ENCODE measurements at regions of chr16 and their contacts with region 1.

Region 1: DNA sequence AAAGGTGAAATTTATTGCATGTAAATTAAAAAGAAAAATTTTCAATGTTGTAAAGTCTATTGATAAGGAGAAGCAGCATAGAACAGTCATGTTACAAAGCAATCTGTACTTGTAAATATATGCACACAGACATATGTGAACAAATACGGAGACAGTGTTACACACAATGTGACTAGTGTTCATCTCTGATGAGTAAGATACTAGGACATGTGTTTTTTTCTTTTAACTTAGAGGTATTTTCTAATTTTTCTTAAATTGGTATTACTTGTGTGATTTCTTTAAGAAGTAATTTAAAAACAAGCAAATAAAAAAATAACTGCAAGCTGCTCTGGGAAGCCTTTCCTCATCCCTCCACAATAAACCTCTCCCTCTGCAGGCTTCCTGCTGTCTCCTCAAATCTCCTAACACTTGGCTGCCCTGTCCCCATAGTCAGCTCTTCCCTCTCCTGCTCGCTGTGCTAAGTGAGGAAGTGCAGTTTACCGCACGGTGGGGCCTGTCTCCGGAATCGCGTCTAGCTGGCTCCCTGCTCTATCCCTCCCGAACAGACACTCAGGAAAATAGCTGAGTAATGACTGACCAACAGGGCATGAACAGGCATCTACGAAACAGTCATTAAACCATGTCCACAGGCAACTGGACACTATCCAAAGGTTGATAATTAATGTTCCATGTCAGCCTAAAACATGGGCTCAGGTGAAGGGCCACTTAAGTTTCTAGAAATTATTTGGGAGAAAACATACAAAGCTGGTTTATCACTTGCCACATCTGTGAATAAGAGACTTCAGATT is 35.9 kb downstream of the CMTM4 start:
- DNase-seq: peak; percentile 85
- H3K4me3 ChIP-seq: no peak overlapping the region
- H3K27ac ChIP-seq: peak overlapping the region; percentile 74
- H3K4me1 ChIP-seq: peaks cover 42% of the 10 kb centered on the region
- H3K27me3 ChIP-seq: no peaks in the 10 kb centered on the region
- CTCF ChIP-seq: peak in 1 of 2 donors; percentile 39

Region 2: DNA sequence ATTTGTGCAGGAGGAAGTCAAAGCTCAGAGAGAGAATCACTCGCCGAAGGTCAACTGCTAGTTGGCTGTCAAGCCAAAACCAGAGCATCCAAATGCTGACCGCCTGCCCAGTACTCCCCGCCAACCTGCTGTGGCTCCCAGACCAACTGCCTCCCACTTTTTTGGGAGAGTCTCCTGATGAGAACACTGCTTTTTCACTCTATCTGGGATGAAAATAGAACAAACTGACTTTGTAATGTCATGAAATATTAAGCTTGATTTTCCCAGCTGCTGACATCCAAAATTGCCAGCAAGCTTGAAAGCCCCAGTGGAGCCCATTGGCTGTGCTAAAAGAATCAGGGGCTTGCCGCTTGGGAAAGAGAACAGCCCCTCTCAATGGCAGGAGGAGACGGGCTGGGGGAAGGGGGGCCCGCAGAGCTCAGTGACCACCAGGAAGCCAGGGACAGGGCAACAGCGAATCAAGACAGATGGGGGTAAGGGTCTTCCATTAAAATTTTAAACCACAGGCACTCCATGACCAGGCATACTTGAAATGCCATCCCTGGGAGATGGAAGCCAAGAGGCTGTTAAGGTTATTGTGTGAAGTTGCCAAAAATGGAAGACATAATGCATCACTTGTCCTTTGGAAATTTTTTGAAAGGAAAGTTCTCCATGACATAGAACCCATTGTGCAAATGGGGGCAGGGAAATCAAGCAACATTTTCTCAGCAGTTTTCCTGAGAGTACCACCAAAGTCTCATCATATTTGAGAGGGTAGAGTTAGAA is 419.8 kb before region 1 on chr16:
- CTCF ChIA-PET with region 1: no interaction called
- dilution Hi-C with region 1: no loop called
- in situ Hi-C with region 1: no loop called
- intact Hi-C with region 1: no loop called
- DNase-seq: no peak
- H3K4me3 ChIP-seq: no peak overlapping the region
- H3K27ac ChIP-seq: no peak overlapping the region
- H3K4me1 ChIP-seq: no peaks in the 10 kb centered on the region
- H3K27me3 ChIP-seq: peaks cover 2% of the 10 kb centered on the region
- CTCF ChIP-seq: no peak

Region 3: GRCh38 chr16:66562407-66562806 is 98.2 kb before region 1 on chr16:
- CTCF ChIA-PET with region 1: interaction called, 11 read pairs
- dilution Hi-C with region 1: no loop called
- in situ Hi-C with region 1: no loop called
- intact Hi-C with region 1: no loop called
- DNase-seq: no peak
- H3K4me3 ChIP-seq: no peak overlapping the region
- H3K27ac ChIP-seq: no peak overlapping the region
- H3K4me1 ChIP-seq: no peaks in the 10 kb centered on the region
- H3K27me3 ChIP-seq: no peaks in the 10 kb centered on the region
- CTCF ChIP-seq: peak in 1 of 2 donors; percentile 38

Region 4: DNA sequence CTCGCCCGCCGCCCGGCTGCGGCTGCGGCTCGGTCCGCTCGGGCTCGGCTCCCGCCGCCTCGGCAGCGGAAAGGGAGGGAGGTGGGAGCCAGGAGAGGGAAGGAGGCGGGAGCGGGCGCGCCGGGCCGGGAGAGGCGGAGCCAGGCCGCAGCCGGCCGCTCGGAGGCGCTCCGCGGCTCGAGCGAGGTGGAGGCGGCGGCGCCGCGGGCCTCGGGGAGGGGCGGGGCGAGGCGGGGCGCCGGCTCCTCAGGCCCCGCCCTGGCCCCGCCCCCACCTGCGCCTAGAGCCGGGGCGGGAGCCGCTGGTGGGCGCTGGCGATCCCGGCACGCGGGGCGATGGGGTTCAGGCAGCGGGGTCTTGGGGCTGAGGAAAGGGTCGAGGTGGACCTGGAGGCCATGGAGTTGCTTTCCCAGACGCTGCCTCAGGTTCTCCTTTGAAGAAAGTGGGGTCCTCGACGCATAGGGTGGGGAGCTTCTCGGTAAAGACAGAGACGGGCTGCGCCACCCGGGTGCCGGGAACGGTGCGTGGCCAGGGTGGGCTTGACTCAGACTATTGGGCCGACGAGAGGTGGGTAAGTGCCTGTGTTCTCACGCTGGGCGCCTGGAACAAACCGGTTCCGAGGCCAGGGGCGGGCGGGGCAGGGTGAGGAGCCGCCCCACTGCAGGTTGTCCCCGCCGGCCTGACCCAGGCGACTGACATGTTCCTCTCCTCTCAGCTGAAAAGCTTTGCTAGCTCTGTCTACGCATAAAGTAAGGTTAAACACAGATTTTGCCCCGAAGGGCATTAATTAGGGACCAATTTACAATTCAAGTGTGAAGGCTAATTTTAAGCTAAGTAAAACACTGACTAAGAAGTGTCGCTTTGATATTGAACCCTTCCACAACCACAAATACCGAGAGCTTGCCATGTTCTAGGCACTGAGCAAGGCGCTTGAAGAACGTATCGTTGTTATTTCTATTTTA is 36.3 kb after region 1 on chr16 and contains the start of gene CMTM4:
- CTCF ChIA-PET with region 1: interaction called, 3 read pairs
- dilution Hi-C with region 1: no loop called
- in situ Hi-C with region 1: no loop called
- intact Hi-C with region 1: loop called (anchors 5 kb)
- DNase-seq: peak; percentile 88
- H3K4me3 ChIP-seq: peak within 1 kb of the TSS; percentile 79 to 98 (median 86)
- H3K27ac ChIP-seq: peak within 1 kb of the TSS; percentile 65
- H3K4me1 ChIP-seq: peaks cover 24% of the 10 kb centered on the region
- H3K27me3 ChIP-seq: no peaks in the 10 kb centered on the region
- CTCF ChIP-seq: peak; percentile 7 to 28
- total RNA-seq, gene CMTM4: 24.0 to 81.7 TPM

Region 5: GRCh38 chr16:66728117-66728787 is 67.6 kb after region 1 on chr16:
- CTCF ChIA-PET with region 1: no interaction called
- dilution Hi-C with region 1: no loop called
- in situ Hi-C with region 1: no loop called
- intact Hi-C with region 1: loop called (anchors 1 kb)
- DNase-seq: peak; percentile 26
- H3K4me3 ChIP-seq: no peak overlapping the region
- H3K27ac ChIP-seq: no peak overlapping the region
- H3K4me1 ChIP-seq: no peaks in the 10 kb centered on the region
- H3K27me3 ChIP-seq: no peaks in the 10 kb centered on the region
- CTCF ChIP-seq: peak; percentile 47 to 58

Region 6: GRCh38 chr16:66872943-66873684 is 212.5 kb after region 1 on chr16:
- CTCF ChIA-PET with region 1: interaction called, 23 read pairs
- dilution Hi-C with region 1: no loop called
- in situ Hi-C with region 1: no loop called
- intact Hi-C with region 1: no loop called
- DNase-seq: peak; percentile 100
- H3K4me3 ChIP-seq: peak overlapping the region in 2 of 3 experiments; percentile 32 to 42
- H3K27ac ChIP-seq: no peak overlapping the region
- H3K4me1 ChIP-seq: peaks cover 14% of the 10 kb centered on the region
- H3K27me3 ChIP-seq: no peaks in the 10 kb centered on the region
- CTCF ChIP-seq: peak; percentile 87 to 95

Measured in mammary epithelial cell (primary cell).